Mammary epithelial cell (primary cell): ENCODE measurements at regions of chr9 and their contacts with region 1.

Region 1: DNA sequence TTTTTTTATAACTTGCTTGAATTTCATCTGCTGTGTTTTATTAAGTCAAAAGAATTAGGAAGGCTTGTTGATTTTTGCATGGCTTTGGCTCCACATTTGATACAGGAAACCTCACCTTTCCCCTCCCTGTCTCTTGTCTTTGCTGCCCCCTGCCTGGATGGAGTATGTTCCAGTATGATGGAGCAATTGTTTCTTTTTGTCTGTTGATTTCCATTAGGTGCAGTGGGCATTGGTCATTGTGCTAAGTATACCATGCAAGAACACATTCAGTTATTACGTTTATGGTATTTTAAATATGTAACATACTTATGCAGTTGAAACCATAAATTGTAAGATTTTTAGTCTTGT is 19.6 kb downstream of the TJP2 start:
- DNase-seq: no peak
- H3K4me3 ChIP-seq: no peak overlapping the region
- H3K27ac ChIP-seq: no peak overlapping the region
- H3K4me1 ChIP-seq: no peaks in the 10 kb centered on the region
- H3K27me3 ChIP-seq: no peaks in the 10 kb centered on the region
- CTCF ChIP-seq: peak in 1 of 2 donors; percentile 25

Region 2: GRCh38 chr9:69149321-69149807 is 44.3 kb before region 1 on chr9:
- CTCF ChIA-PET with region 1: interaction called, 6 read pairs
- dilution Hi-C with region 1: no loop called
- in situ Hi-C with region 1: no loop called
- intact Hi-C with region 1: loop called (anchors 1 kb)
- DNase-seq: peak; percentile 42
- H3K4me3 ChIP-seq: peak overlapping the region in 1 of 3 experiments; percentile 4
- H3K27ac ChIP-seq: peak overlapping the region; percentile 38
- H3K4me1 ChIP-seq: peaks cover 8% of the 10 kb centered on the region
- H3K27me3 ChIP-seq: no peaks in the 10 kb centered on the region
- CTCF ChIP-seq: peak; percentile 11 to 50